ENCODE measurements at regions of chr1 and their contacts with region 1.

Region 1: GRCh38 chr1:7207875-7208646 is 422.8 kb downstream of the CAMTA1 start:
- DNase-seq: peak; percentile 55
- H3K4me3 Mint-ChIP-seq: no peak overlapping the region
- H3K27ac Mint-ChIP-seq: no peak overlapping the region
- H3K4me1 Mint-ChIP-seq: no peaks in the 10 kb centered on the region
- H3K27me3 Mint-ChIP-seq: peaks cover 51% of the 10 kb centered on the region

Region 2: GRCh38 chr1:7042322-7043190 is 165.5 kb before region 1 on chr1:
- CTCF ChIA-PET with region 1: interaction called, 5 read pairs
- intact Hi-C with region 1: loop called (anchors 2 kb)
- DNase-seq: no peak
- H3K4me3 Mint-ChIP-seq: no peak overlapping the region
- H3K27ac Mint-ChIP-seq: no peak overlapping the region
- H3K4me1 Mint-ChIP-seq: no peaks in the 10 kb centered on the region
- H3K27me3 Mint-ChIP-seq: peaks cover 4% of the 10 kb centered on the region

Region 3: GRCh38 chr1:7186382-7187109 is 21.5 kb before region 1 on chr1:
- CTCF ChIA-PET with region 1: no interaction called
- intact Hi-C with region 1: no loop called
- DNase-seq: no peak
- H3K4me3 Mint-ChIP-seq: no peak overlapping the region
- H3K27ac Mint-ChIP-seq: no peak overlapping the region
- H3K4me1 Mint-ChIP-seq: no peaks in the 10 kb centered on the region
- H3K27me3 Mint-ChIP-seq: peaks cover 5% of the 10 kb centered on the region

Measured in activated naive CD4-positive, alpha-beta T cell treated with anti-CD3 and anti-CD28 coated beads for 36 hours (primary cell).